IMR-90 (cell line): ENCODE measurements at regions of chr11 and their contacts with region 1.

Region 1: GRCh38 chr11:110092515-110093404 is at the start of gene ZC3H12C:
- DNase-seq: peak; percentile 90
- ATAC-seq: peak; percentile 88
- H3K4me3 ChIP-seq: peak within 1 kb of the TSS; percentile 76
- H3K27ac ChIP-seq: peak within 1 kb of the TSS; percentile 92
- H3K4me1 ChIP-seq: peaks cover 7% of the 10 kb centered on the region
- H3K27me3 ChIP-seq: no peaks in the 10 kb centered on the region
- CTCF ChIP-seq: peak; percentile 81
- POLR2A ChIP-seq: peak; percentile 80
- RAD21 ChIP-seq: peak; percentile 58
- total RNA-seq, gene ZC3H12C: 14.2 and 15.8 TPM in 2 replicates

Region 2: DNA sequence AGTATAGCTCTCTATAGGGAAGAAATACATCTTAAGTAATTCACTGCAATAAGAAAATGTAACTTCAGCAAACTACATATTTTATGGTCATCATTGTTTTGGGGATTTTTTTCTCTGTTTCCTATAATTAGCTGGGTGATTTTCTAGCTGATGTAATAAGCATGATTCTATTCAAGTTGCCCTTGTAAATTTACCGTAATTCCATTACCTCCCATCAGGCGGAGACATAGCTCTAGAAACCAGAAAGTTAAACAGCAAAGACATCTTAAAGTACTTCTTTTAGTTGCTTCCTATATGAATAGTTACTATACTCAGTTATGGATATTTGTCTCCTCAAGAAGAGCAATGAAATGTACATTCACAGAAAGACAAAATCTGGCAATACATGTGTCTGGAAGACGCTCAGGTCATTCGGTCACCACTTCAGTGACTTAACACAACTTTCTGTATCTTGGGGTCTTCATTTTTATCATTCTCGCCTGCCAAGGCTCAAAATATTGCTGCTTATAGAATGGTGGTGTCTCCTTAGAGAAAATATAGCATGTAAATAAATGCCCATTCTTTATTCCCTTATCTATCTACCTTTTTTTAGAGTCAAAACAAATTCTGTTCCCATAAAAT is 239.5 kb before region 1 on chr11:
- CTCF ChIA-PET with region 1: no interaction called
- POLR2A ChIA-PET with region 1: no interaction called
- dilution Hi-C with region 1: no loop called
- in situ Hi-C with region 1: no loop called
- intact Hi-C with region 1: loop called (anchors 2 kb)
- DNase-seq: peak; percentile 87
- ATAC-seq: peak; percentile 87
- H3K4me3 ChIP-seq: no peak overlapping the region
- H3K27ac ChIP-seq: no peak overlapping the region
- H3K4me1 ChIP-seq: no peaks in the 10 kb centered on the region; the same call in 1 of the 2 replicates
- H3K27me3 ChIP-seq: no peaks in the 10 kb centered on the region
- CTCF ChIP-seq: peak; percentile 91
- POLR2A ChIP-seq: no peak
- RAD21 ChIP-seq: peak; percentile 87

Region 3: GRCh38 chr11:109956124-109956793 is 136.5 kb before region 1 on chr11:
- CTCF ChIA-PET with region 1: no interaction called
- POLR2A ChIA-PET with region 1: no interaction called
- dilution Hi-C with region 1: no loop called
- in situ Hi-C with region 1: loop called (anchors 5 kb)
- intact Hi-C with region 1: no loop called
- DNase-seq: no peak
- ATAC-seq: no peak
- H3K4me3 ChIP-seq: no peak overlapping the region
- H3K27ac ChIP-seq: no peak overlapping the region
- H3K4me1 ChIP-seq: no peaks in the 10 kb centered on the region
- H3K27me3 ChIP-seq: no peaks in the 10 kb centered on the region
- CTCF ChIP-seq: no peak
- POLR2A ChIP-seq: no peak
- RAD21 ChIP-seq: no peak

Region 4: GRCh38 chr11:109993786-109994185 is 99.0 kb before region 1 on chr11:
- CTCF ChIA-PET with region 1: no interaction called
- POLR2A ChIA-PET with region 1: no interaction called
- dilution Hi-C with region 1: no loop called
- in situ Hi-C with region 1: no loop called
- intact Hi-C with region 1: no loop called
- DNase-seq: peak; percentile 13
- ATAC-seq: no peak
- H3K4me3 ChIP-seq: no peak overlapping the region
- H3K27ac ChIP-seq: no peak overlapping the region
- H3K4me1 ChIP-seq: no peaks in the 10 kb centered on the region
- H3K27me3 ChIP-seq: 0 out of 2 replicates have a peak, but pooled peaks cover 1% of the 10 kb centered on the region
- CTCF ChIP-seq: no peak
- POLR2A ChIP-seq: no peak
- RAD21 ChIP-seq: no peak

Region 5: DNA sequence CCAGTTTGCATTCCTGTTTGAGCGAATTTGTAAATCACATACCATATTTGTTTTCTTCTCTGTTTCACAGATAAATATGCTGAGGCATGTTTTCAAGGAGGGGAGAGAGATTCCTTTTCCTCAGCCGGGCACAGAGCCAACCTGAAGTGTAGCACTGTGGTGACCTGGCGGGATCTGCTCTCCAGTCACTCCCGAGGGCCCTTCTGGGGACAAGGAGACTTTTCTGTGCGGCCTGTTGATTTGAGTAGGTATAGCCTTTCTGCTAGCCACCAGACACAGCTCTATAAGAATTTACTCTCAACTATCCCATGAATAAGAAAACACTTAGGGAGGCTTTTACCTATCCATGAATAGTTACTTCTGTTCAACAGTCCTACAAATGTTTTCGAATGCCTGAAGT is 273.5 kb after region 1 on chr11:
- CTCF ChIA-PET with region 1: no interaction called
- POLR2A ChIA-PET with region 1: no interaction called
- dilution Hi-C with region 1: no loop called
- in situ Hi-C with region 1: no loop called
- intact Hi-C with region 1: loop called (anchors 5 kb)
- DNase-seq: peak; percentile 28
- ATAC-seq: peak; percentile 78
- H3K4me3 ChIP-seq: no peak overlapping the region
- H3K27ac ChIP-seq: no peak overlapping the region
- H3K4me1 ChIP-seq: peaks cover 4% of the 10 kb centered on the region
- H3K27me3 ChIP-seq: no peaks in the 10 kb centered on the region
- CTCF ChIP-seq: no peak
- POLR2A ChIP-seq: no peak
- RAD21 ChIP-seq: no peak

Region 6: DNA sequence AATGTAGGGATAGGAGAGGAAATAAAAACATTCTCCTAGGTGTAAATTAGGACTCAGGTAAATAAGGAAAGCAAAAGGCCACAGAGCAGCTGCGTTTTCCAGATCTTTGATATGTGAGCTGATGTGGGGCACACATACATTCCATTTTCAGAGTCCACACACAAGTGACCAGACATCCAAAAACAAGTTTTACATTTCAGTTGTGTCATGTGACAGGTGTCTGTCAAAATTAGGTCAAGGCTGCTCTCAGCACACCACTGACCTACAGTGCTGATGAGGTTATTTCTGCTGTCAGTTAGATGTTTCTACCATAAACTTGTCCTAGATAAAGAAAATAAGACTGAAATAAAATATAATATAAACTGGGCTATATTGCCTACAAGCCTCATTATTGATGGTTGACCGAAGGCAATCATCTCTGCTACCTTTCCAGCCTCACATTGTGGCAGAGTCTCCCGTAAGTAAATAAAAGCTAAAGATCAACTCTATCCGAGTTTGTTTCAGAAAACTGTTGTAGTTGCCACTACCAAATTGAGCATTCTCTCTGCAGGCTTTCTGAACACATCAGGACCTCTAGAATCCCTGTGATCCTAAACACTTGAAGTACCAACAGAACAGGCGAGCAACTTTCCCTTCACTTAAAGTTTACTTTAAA is 611.6 kb after region 1 on chr11:
- CTCF ChIA-PET with region 1: no interaction called
- POLR2A ChIA-PET with region 1: no interaction called
- dilution Hi-C with region 1: no loop called
- in situ Hi-C with region 1: no loop called
- intact Hi-C with region 1: no loop called
- DNase-seq: no peak
- ATAC-seq: no peak
- H3K4me3 ChIP-seq: no peak overlapping the region
- H3K27ac ChIP-seq: no peak overlapping the region
- H3K4me1 ChIP-seq: no peaks in the 10 kb centered on the region
- H3K27me3 ChIP-seq: no peaks in the 10 kb centered on the region
- CTCF ChIP-seq: no peak
- POLR2A ChIP-seq: no peak
- RAD21 ChIP-seq: no peak